ENCODE measurements at regions of chr2 and their contacts with region 1.

Region 1: GRCh38 chr2:61660511-61661388 is 122.6 kb upstream of the XPO1 start:
- DNase-seq: no peak
- H3K4me3 Mint-ChIP-seq: no peak overlapping the region
- H3K27ac Mint-ChIP-seq: no peak overlapping the region
- H3K4me1 Mint-ChIP-seq: peaks cover 9% of the 10 kb centered on the region
- H3K27me3 Mint-ChIP-seq: peaks cover 3% of the 10 kb centered on the region

Region 2: GRCh38 chr2:61566566-61566965 is 94.2 kb before region 1 on chr2:
- intact Hi-C with region 1: loop called (anchors 10 kb)
- DNase-seq: no peak
- H3K4me3 Mint-ChIP-seq: no peak overlapping the region
- H3K27ac Mint-ChIP-seq: no peak overlapping the region
- H3K4me1 Mint-ChIP-seq: peaks cover 3% of the 10 kb centered on the region
- H3K27me3 Mint-ChIP-seq: peaks cover 8% of the 10 kb centered on the region

Region 3: GRCh38 chr2:62287899-62288880 is 627.4 kb after region 1 on chr2:
- intact Hi-C with region 1: no loop called
- DNase-seq: no peak
- H3K4me3 Mint-ChIP-seq: no peak overlapping the region
- H3K27ac Mint-ChIP-seq: no peak overlapping the region
- H3K4me1 Mint-ChIP-seq: peaks cover 3% of the 10 kb centered on the region
- H3K27me3 Mint-ChIP-seq: no peaks in the 10 kb centered on the region

Measured in activated CD4-positive, alpha-beta T cell treated with anti-CD3 and anti-CD28 coated beads, Interleukin-2, amount 10 ng/mL, durations not matched to agents 24 days and 14 days (primary cell).